Right ventricle myocardium inferior (tissue), 1 donor: ENCODE measurements at regions of chr14 and their contacts with region 1.

Region 1: GRCh38 chr14:29710015-29710565 is 217.6 kb downstream of the PRKD1 start:
- DNase-seq: no peak
- ATAC-seq: no peak

Region 2: DNA sequence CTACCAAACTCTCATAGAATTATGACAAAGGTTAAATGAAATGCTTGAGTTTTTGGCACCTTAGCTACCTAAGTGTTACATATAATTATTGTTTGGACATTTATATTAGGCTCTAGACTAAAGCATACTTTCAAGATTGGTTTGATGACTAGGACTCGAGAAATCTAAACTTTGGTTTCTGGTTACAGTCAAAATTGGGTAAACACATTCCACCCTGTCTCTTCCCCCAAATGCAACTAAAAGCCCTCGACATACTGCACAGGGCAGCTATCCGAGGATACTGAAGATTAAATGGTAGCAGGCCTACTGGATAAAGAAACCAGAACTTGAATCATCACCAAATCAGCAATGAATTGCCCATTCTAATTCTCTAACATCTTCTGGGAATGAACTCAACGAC is 151.6 kb before region 1 on chr14:
- intact Hi-C with region 1: loop called (anchors 10 kb)
- DNase-seq: no peak
- ATAC-seq: no peak

Region 3: DNA sequence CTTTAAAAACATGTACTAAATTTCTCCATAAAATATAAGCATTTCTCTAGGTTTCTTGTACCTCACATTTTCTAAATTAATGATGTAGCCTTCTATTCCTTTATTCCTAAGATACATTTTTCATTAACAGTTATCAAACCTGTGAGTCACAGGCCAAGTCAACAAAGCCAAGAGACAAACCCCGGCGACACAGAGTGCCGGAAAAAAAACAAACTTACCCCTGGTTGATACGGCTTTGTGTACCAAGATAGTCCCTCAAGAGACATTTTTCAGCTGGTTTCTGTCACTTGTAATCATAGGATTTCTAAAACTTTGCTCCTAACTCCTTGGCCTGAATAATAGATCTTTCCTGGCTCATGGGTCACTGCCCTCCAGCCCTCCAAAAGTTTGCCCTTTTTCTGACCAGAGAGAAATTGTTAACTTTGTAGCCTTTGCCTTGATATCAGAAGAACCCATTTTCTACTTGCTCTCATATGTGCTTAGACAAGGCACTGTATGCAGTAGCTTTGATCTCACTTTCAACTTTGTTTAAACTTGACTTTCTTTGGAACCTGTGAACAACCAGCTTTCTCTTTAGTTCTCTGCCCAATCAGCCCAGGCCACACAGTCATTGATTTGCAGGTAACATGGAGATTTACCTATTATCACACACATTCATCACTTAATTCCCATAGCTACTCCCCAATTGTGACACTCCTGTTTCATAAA is 45.4 kb after region 1 on chr14:
- intact Hi-C with region 1: no loop called
- DNase-seq: no peak
- ATAC-seq: no peak

Region 4: DNA sequence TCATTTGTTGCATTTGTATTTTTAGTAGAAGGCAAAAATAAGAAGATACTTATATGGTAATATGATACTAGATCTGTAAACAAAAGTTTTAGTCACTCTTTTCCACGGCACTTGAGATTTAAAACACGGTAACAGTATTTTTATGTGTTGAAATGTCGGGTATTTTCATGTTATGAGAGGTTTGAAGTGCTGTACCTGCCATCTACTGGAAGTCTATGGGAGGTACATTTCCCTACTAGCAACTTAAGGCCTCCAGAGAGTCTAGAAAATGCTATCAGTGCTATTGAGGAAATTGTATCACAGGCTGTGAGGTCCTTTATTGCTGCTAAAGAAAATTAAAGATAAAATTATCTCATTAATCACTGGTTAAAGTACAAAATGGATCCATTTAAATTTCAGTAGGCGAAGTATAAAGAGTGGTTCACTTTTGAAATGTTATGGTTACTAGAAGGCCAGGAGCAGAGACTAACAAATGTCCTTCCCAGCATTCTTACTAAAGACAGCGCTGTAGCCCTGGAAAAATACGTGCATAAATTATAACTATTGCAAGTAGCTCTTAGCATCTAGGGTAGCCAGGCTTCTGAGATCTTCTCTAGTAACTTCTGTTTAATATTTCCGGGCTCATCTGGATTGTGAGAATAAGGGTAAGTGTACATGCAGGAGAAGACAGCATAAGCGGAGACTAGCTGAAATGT is 295.2 kb after region 1 on chr14:
- intact Hi-C with region 1: loop called (anchors 10 kb)
- DNase-seq: no peak
- ATAC-seq: peak; percentile 54